ENCODE measurements at regions of chr16 and their contacts with region 1.

Region 1: GRCh38 chr16:46830902-46831647 is at the start of gene C16orf87:
- DNase-seq: peak; percentile 98
- H3K4me3 Mint-ChIP-seq: peak within 1 kb of the TSS; percentile 95
- H3K27ac Mint-ChIP-seq: peak within 1 kb of the TSS; percentile 99
- H3K4me1 Mint-ChIP-seq: peaks cover 30% of the 10 kb centered on the region
- H3K27me3 Mint-ChIP-seq: peaks cover 17% of the 10 kb centered on the region
- total RNA-seq, gene C16orf87: 32.0 and 32.7 TPM in 2 replicates

Region 2: DNA sequence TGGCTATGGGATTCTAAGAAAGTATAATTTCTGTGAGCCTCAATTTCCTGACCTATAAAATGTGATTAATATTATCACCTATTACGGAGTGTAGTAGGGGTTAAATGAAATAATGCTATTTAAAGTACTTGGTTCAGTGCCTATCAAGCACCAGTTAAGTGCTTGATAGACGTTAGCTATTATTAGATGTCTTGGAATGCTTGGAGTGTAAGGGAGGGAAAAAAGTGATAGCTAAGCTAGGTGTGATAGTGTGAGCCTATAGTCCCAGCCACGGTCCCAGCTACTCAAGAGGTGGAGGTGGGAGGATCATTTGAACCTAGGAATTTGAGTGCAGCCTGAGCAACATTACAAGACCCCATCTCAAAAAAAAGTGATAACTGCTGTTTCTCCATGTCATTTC is 134.1 kb before region 1 on chr16:
- intact Hi-C with region 1: no loop called
- DNase-seq: no peak
- H3K4me3 Mint-ChIP-seq: no peak overlapping the region
- H3K27ac Mint-ChIP-seq: no peak overlapping the region
- H3K4me1 Mint-ChIP-seq: peaks cover 4% of the 10 kb centered on the region
- H3K27me3 Mint-ChIP-seq: no peaks in the 10 kb centered on the region

Region 3: DNA sequence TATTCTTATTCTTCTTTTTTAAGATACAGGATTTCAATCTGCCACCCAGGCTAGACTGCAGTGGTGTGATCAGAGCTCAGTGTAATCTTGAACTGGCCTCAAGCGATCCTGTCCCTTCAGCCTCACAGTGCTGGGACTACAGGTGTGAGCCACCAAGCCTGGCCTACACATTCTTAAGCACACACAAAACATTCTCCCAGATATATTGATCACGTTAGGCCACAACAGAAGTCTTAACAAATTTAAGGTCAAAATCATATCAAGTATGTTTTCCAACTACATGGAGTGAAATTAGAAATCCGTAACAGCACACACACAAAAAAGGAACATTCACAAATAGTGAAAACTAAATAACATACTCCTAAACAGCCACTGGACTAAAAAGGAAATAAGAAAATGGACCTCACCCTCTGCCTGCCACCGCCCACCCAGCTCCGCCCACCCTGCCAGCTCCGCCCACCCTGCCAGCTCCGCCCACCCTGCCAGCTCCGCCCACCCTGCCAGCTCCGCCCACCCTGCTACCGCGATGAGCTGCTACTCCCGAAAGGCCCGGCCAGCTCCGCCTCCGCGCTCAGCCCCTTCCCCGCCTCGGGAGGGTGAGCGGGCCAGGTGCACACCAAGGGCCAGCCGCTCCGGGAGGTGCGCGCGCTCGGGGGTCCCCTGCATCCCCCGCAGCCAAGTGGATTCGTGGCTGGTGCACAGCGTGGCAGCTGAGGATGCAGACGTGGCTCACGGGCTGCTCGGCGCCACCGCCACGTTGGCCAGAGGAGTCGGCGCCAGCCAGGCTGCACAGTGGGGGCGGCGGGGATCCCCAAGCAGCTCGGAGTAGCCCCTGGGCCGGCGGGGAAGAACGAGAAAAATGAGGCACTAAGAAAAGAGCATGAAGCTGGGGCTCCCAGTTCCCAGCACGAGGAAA is 41.3 kb before region 1 on chr16:
- intact Hi-C with region 1: loop called (anchors 1 kb)
- DNase-seq: peak; percentile 95
- H3K4me3 Mint-ChIP-seq: peak overlapping the region; percentile 79
- H3K27ac Mint-ChIP-seq: peak overlapping the region; percentile 69
- H3K4me1 Mint-ChIP-seq: peaks cover 18% of the 10 kb centered on the region
- H3K27me3 Mint-ChIP-seq: peaks cover 15% of the 10 kb centered on the region

Region 4: DNA sequence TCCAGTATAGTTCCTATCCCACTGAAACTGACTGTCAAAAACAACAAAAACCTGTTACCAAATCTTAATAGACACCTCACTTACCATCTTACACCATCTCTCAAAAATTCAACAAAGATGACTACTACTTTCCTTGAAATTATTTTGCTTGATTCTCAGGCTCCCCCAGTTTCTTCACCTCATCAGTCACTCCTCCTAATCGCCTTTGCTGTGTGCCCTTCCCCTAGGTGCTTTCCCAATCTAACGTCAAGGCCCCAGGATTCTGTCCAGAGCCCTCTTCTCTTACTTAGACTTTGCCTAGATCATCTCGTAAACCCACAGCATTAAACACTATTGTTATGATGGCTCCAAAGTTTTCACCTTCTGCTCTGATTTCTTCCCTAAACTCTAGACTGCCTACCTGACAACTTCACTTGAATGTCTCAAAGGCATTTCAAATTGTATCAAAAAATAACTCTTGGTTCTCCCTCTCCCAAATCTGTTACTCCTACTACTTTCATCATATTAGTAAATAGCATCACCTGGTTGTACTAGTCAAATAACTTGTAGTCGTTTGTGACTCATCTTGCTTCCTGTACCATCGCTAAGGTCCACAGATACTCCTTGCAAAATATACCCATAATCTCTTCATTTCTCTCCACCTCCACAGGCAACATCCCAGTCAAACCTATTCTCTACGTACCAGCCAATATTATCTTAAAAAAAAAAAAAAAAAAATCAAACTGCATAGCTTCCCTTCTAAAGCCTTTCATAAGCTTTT is 18.1 kb before region 1 on chr16:
- intact Hi-C with region 1: loop called (anchors 1 kb)
- DNase-seq: peak; percentile 52
- H3K4me3 Mint-ChIP-seq: peak overlapping the region; percentile 6
- H3K27ac Mint-ChIP-seq: peak overlapping the region; percentile 77
- H3K4me1 Mint-ChIP-seq: peaks cover 41% of the 10 kb centered on the region
- H3K27me3 Mint-ChIP-seq: no peaks in the 10 kb centered on the region

Region 5: DNA sequence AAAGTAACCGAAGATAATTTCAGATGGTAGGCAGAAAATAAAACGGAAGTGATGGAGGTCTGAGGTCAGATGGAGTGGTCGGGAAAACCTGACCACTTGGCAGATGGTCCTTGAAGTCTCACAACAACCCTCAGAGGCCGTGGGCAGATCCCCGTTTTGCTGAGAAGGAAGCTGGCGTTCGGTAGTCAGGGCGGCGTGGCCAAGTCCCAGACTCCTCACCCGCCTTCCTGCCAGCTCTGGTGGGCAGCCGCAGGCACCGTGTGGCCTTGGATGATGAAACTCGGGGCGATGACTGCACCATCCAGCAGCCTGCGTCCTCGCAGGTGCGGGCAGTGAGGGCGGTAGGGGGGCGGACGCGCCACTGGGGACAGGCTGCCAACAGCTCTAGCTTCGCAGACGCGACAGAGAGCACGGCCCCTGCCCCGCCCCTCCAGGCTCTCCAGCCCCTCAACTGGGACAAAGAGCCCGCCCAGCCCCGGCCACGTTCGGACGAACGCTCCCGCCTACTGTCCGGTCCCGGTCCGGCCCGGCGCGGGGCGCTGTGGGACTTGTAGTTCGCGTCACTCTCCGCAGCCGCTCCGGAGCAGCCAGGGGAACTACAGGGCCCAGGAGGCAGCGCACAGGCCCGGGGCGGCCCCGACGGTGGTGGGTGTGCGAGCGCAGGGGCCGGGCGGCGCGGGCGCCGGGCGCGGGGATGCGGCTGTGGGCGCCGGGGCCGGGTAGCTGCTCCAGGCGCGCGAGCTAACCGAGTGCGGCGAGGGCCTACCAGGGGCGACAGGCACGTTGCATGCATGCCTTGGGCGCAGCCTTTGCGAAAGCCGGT is 52.8 kb after region 1 on chr16 and contains the start of gene GPT2:
- intact Hi-C with region 1: loop called (anchors 1 kb)
- DNase-seq: peak; percentile 96
- H3K4me3 Mint-ChIP-seq: peak within 1 kb of the TSS; percentile 85
- H3K27ac Mint-ChIP-seq: peak within 1 kb of the TSS; percentile 90
- H3K4me1 Mint-ChIP-seq: peaks cover 14% of the 10 kb centered on the region
- H3K27me3 Mint-ChIP-seq: peaks cover 31% of the 10 kb centered on the region
- total RNA-seq, gene GPT2: 15.7 and 16.0 TPM in 2 replicates

Region 6: DNA sequence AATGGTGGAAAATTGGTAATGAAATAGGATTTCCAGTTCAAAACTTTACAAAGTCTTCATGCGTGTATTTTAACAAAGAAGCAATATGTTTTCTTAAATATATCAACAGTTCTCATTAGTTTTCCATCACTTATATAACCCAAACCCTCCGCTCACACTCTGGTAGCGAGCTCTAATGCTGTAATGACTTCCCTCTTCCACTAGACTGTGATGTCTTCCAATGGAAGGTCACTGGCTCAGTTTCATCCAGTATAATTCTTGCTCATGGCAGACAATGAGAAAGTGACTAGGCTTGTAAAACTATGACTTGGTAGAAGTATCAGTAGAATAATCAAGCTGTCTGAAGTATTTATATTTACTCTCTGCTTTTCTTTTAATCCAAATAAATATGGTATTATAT is 279.9 kb after region 1 on chr16:
- intact Hi-C with region 1: loop called (anchors 5 kb)
- DNase-seq: no peak
- H3K4me3 Mint-ChIP-seq: no peak overlapping the region
- H3K27ac Mint-ChIP-seq: no peak overlapping the region
- H3K4me1 Mint-ChIP-seq: peaks cover 10% of the 10 kb centered on the region
- H3K27me3 Mint-ChIP-seq: no peaks in the 10 kb centered on the region